ENCODE measurements at regions of chr2 and their contacts with region 1.

Region 1: DNA sequence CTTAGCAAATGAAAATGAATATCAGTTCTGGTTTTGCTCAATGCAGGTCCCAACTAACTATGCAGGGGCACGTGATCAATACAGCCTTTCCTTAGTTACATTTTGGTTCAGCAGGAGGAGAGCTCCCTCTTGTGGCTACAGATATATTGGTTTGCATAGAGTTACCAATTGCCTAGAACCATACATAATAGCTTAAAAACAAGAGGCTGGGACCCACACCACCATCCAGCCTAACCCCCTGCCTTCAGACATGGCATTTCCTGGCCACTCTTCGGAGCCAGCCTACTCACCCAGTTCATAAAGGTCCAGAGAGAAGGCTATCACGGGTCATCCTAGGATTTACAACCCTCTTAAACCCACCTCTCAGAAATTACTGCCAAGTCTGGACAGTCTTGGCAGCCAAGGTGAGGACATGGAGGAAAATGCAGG is 10.5 kb downstream of the CCDC93 start:
- DNase-seq: peak; percentile 63 to 73 (median 69)
- H3K4me3 ChIP-seq: no peak overlapping the region
- H3K4me3 Mint-ChIP-seq: peak overlapping the region in 1 of 8 donors; percentile 1
- H3K27ac ChIP-seq: no peak overlapping the region
- H3K27ac Mint-ChIP-seq: peak overlapping the region in 6 of 7 donors; percentile 5 to 85 (median 65)
- H3K4me1 ChIP-seq: no peaks in the 10 kb centered on the region
- H3K4me1 Mint-ChIP-seq: peaks cover 7 to 17% (median 14%) of the 10 kb centered on the region in 4 donors
- H3K27me3 ChIP-seq: no peaks in the 10 kb centered on the region
- H3K27me3 Mint-ChIP-seq: no peaks in the 10 kb centered on the region

Region 2: GRCh38 chr2:117856415-117857210 is 146.8 kb before region 1 on chr2:
- CTCF ChIA-PET with region 1: no interaction called
- POLR2A ChIA-PET with region 1: no interaction called
- intact Hi-C with region 1: no loop called
- DNase-seq: no peak
- H3K4me3 ChIP-seq: no peak overlapping the region
- H3K4me3 Mint-ChIP-seq: no peak overlapping the region
- H3K27ac ChIP-seq: no peak overlapping the region
- H3K27ac Mint-ChIP-seq: no peak overlapping the region
- H3K4me1 ChIP-seq: no peaks in the 10 kb centered on the region
- H3K4me1 Mint-ChIP-seq: no peaks in the 10 kb centered on the region
- H3K27me3 ChIP-seq: peaks cover 5% of the 10 kb centered on the region
- H3K27me3 Mint-ChIP-seq: peaks cover 10 to 31% of the 10 kb centered on the region in 2 donors

Region 3: DNA sequence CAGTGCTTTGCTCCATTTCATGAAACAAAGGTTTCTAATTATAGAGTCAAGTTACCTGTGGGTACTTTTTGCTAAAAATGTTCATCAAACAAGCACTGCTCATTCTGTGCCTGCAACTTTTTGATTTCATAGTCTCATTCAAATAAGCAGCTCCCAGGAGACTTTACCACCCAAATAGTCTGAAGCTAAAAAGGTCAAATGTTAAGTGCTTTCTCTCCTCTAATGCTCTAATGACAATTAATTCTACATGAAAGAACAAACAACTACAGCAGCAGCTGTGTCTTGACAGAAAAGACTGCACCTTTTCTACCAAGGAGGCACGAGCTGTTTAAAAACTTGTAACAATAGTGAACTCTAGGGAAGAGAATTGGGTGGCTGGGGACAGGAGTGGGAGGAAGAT is 54.8 kb before region 1 on chr2:
- CTCF ChIA-PET with region 1: interaction called, 16 read pairs
- POLR2A ChIA-PET with region 1: interaction called, 4 read pairs
- intact Hi-C with region 1: no loop called
- DNase-seq: no peak
- H3K4me3 ChIP-seq: no peak overlapping the region
- H3K4me3 Mint-ChIP-seq: no peak overlapping the region
- H3K27ac ChIP-seq: no peak overlapping the region
- H3K27ac Mint-ChIP-seq: no peak overlapping the region
- H3K4me1 ChIP-seq: no peaks in the 10 kb centered on the region
- H3K4me1 Mint-ChIP-seq: no peaks in the 10 kb centered on the region
- H3K27me3 ChIP-seq: no peaks in the 10 kb centered on the region
- H3K27me3 Mint-ChIP-seq: no peaks in the 10 kb centered on the region

Region 4: GRCh38 chr2:117972425-117973138 is 30.8 kb before region 1 on chr2:
- CTCF ChIA-PET with region 1: interaction called, 20 read pairs
- POLR2A ChIA-PET with region 1: no interaction called
- intact Hi-C with region 1: no loop called
- DNase-seq: no peak
- H3K4me3 ChIP-seq: no peak overlapping the region
- H3K4me3 Mint-ChIP-seq: no peak overlapping the region
- H3K27ac ChIP-seq: no peak overlapping the region
- H3K27ac Mint-ChIP-seq: peak overlapping the region in 2 of 7 donors; percentile 10 to 48
- H3K4me1 ChIP-seq: no peaks in the 10 kb centered on the region
- H3K4me1 Mint-ChIP-seq: peaks cover 0 to 4% (median under 1%) of the 10 kb centered on the region in 4 donors
- H3K27me3 ChIP-seq: no peaks in the 10 kb centered on the region
- H3K27me3 Mint-ChIP-seq: no peaks in the 10 kb centered on the region

Region 5: DNA sequence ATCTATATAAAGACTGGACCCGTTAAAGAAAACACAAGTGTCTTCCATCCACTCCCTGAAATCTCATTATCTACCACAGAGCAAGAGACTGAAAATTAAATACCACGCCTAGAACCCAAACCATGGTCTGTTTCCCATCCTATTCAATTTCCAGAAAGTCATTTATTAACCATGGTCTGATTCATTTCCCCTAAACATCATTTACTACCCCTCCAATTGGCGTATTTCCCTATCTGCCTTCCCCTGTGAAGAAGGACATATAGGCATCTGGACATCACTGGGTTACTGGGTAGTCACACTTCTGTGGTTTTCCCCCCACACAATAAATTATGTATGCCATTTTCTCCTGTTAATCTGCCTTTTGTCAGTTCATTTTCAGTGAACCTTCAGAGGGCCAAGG is 20.4 kb before region 1 on chr2:
- CTCF ChIA-PET with region 1: interaction called, 58 read pairs
- POLR2A ChIA-PET with region 1: no interaction called
- intact Hi-C with region 1: no loop called
- DNase-seq: no peak
- H3K4me3 ChIP-seq: no peak overlapping the region
- H3K4me3 Mint-ChIP-seq: no peak overlapping the region
- H3K27ac ChIP-seq: no peak overlapping the region
- H3K27ac Mint-ChIP-seq: peak overlapping the region in 1 of 7 donors; percentile 32
- H3K4me1 ChIP-seq: no peaks in the 10 kb centered on the region
- H3K4me1 Mint-ChIP-seq: peaks cover 0 to 13% (median 4%) of the 10 kb centered on the region in 4 donors
- H3K27me3 ChIP-seq: no peaks in the 10 kb centered on the region
- H3K27me3 Mint-ChIP-seq: no peaks in the 10 kb centered on the region

Region 6: GRCh38 chr2:118032169-118033013 is 29.0 kb after region 1 on chr2:
- CTCF ChIA-PET with region 1: interaction called, 24 read pairs
- POLR2A ChIA-PET with region 1: no interaction called
- intact Hi-C with region 1: no loop called
- DNase-seq: peak in 3 of 5 donors; percentile 27 to 32 (median 29)
- H3K4me3 ChIP-seq: no peak overlapping the region
- H3K4me3 Mint-ChIP-seq: no peak overlapping the region
- H3K27ac ChIP-seq: no peak overlapping the region
- H3K27ac Mint-ChIP-seq: peak overlapping the region in 1 of 7 donors; percentile 5
- H3K4me1 ChIP-seq: no peaks in the 10 kb centered on the region
- H3K4me1 Mint-ChIP-seq: no peaks in the 10 kb centered on the region
- H3K27me3 ChIP-seq: peaks cover 9% of the 10 kb centered on the region
- H3K27me3 Mint-ChIP-seq: peaks cover 26 to 31% of the 10 kb centered on the region in 2 donors